GM12878 (cell line): ENCODE measurements at regions of chr1 and their contacts with region 1.

Region 1: DNA sequence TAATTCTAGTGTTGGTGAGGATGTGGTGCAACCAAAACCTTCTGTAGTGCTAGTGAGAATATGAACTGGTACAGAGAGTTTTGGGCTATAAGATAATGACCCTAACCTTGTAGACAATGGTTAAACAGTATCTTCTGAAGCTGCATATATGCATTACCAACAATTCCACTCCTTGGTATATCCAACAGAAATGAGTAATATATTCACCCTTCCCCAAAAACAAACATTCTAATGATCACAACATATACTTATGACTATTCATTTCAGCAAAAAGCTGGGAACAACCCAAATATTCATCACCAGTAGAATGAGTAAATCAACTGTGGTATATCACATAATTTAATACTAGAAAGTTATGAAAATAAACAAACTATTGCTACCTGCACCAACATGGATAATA is 39.6 kb upstream of the DPYD start:
- DNase-seq: no peak
- ATAC-seq: no peak
- H3K4me3 ChIP-seq: no peak overlapping the region
- H3K27ac ChIP-seq: no peak overlapping the region
- H3K4me1 ChIP-seq: no peaks in the 10 kb centered on the region
- H3K27me3 ChIP-seq: no peaks in the 10 kb centered on the region
- CTCF ChIP-seq: no peak
- EP300 ChIP-seq: no peak
- POLR2A ChIP-seq: no peak
- RAD21 ChIP-seq: no peak

Region 2: DNA sequence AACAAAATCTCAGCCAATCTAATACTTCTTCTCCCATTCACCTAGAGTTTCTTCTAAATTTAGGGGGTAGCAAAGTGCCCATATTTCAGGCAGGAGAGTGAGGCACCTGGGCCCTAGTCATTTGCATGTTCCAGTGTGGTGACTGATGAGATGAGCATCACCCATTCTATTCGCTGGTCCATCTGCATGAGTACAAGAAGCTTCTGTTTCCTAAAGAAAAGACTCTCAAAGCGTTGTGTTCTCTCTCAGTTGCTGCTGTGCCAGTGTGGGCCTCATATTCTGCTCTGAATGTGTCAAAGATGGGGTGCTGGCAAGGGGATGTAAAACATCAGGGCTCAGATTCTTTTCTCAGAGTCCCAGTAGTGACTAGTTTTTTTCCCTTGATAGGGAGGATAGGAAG is 23.5 kb before region 1 on chr1:
- CTCF ChIA-PET with region 1: no interaction called
- POLR2A ChIA-PET with region 1: no interaction called
- RAD21 ChIA-PET with region 1: no interaction called
- SMC1A ChIA-PET with region 1: no interaction called
- in situ Hi-C with region 1: no loop called
- intact Hi-C with region 1: no loop called
- DNase-seq: no peak
- ATAC-seq: no peak
- H3K4me3 ChIP-seq: no peak overlapping the region
- H3K27ac ChIP-seq: no peak overlapping the region
- H3K4me1 ChIP-seq: no peaks in the 10 kb centered on the region
- H3K27me3 ChIP-seq: no peaks in the 10 kb centered on the region
- CTCF ChIP-seq: no peak
- EP300 ChIP-seq: no peak
- POLR2A ChIP-seq: no peak
- RAD21 ChIP-seq: no peak

Region 3: GRCh38 chr1:97947695-97948094 is 12.8 kb before region 1 on chr1:
- CTCF ChIA-PET with region 1: interaction called, 4 read pairs
- POLR2A ChIA-PET with region 1: no interaction called
- RAD21 ChIA-PET with region 1: interaction called, 3 read pairs
- SMC1A ChIA-PET with region 1: interaction called, 13 read pairs
- in situ Hi-C with region 1: no loop called
- intact Hi-C with region 1: no loop called
- DNase-seq: no peak
- ATAC-seq: no peak
- H3K4me3 ChIP-seq: no peak overlapping the region
- H3K27ac ChIP-seq: no peak overlapping the region
- H3K4me1 ChIP-seq: no peaks in the 10 kb centered on the region
- H3K27me3 ChIP-seq: no peaks in the 10 kb centered on the region
- CTCF ChIP-seq: no peak
- EP300 ChIP-seq: no peak
- POLR2A ChIP-seq: no peak
- RAD21 ChIP-seq: no peak